ENCODE measurements at regions of chr7 and their contacts with region 1.

Region 1: DNA sequence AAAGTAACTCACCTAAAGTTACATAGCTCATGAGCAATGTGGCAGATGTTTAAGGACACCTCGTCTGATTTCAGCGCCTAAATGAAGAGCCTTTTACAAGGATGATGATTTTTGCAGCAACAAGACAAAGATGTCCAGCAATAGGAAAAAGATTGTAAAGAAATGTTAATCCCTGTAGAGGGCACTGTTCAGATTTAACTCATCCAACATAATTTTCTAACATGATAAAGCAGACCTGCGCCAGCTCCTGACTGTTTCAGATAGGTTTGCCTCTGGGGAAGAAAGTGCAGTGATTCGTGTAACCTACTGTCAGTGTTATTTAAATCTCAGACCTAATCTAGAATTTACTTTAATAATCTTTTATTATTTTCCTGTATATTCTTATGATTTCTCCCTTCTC is 595.2 kb downstream of the AUTS2 start:
- DNase-seq: no peak
- ATAC-seq: no peak
- H3K4me3 ChIP-seq: no peak overlapping the region
- H3K27ac ChIP-seq: no peak overlapping the region
- H3K4me1 ChIP-seq: no peaks in the 10 kb centered on the region
- H3K27me3 ChIP-seq: no peaks in the 10 kb centered on the region
- CTCF ChIP-seq: peak in 7 of 12 donors; percentile 14 to 45 (median 36)
- POLR2A ChIP-seq: no peak

Region 2: GRCh38 chr7:69864822-69865221 is 328.7 kb before region 1 on chr7:
- intact Hi-C with region 1: no loop called
- DNase-seq: no peak
- ATAC-seq: no peak
- H3K4me3 ChIP-seq: no peak overlapping the region
- H3K27ac ChIP-seq: no peak overlapping the region
- H3K4me1 ChIP-seq: peaks cover 0 to 5% (median 0%) of the 10 kb centered on the region in 12 donors
- H3K27me3 ChIP-seq: no peaks in the 10 kb centered on the region
- CTCF ChIP-seq: no peak
- POLR2A ChIP-seq: no peak

Region 3: GRCh38 chr7:70700055-70700940 is 506.8 kb after region 1 on chr7:
- intact Hi-C with region 1: loop called in 5 of 10 experiments (anchors 5 to 10 kb)
- DNase-seq: no peak
- ATAC-seq: no peak
- H3K4me3 ChIP-seq: no peak overlapping the region
- H3K27ac ChIP-seq: no peak overlapping the region
- H3K4me1 ChIP-seq: peaks cover 0 to 13% (median 6%) of the 10 kb centered on the region in 12 donors
- H3K27me3 ChIP-seq: peaks cover 0 to 11% (median 0%) of the 10 kb centered on the region in 9 donors
- CTCF ChIP-seq: no peak
- POLR2A ChIP-seq: no peak